Caco-2 (cell line): ENCODE measurements at regions of chr11 and their contacts with region 1.

Region 1: GRCh38 chr11:47691979-47692378 is 23.2 kb downstream of the AGBL2 start:
- DNase-seq: no peak
- H3K4me3 ChIP-seq: no peak overlapping the region
- H3K4me3 Mint-ChIP-seq: no peak overlapping the region
- H3K27ac Mint-ChIP-seq: no peak overlapping the region
- H3K4me1 ChIP-seq: peaks cover 4% of the 10 kb centered on the region; the same call in 1 of the 2 replicates
- H3K4me1 Mint-ChIP-seq: no peaks in the 10 kb centered on the region
- H3K27me3 ChIP-seq: no peaks in the 10 kb centered on the region
- H3K27me3 Mint-ChIP-seq: no peaks in the 10 kb centered on the region
- CTCF ChIP-seq: no peak

Region 2: DNA sequence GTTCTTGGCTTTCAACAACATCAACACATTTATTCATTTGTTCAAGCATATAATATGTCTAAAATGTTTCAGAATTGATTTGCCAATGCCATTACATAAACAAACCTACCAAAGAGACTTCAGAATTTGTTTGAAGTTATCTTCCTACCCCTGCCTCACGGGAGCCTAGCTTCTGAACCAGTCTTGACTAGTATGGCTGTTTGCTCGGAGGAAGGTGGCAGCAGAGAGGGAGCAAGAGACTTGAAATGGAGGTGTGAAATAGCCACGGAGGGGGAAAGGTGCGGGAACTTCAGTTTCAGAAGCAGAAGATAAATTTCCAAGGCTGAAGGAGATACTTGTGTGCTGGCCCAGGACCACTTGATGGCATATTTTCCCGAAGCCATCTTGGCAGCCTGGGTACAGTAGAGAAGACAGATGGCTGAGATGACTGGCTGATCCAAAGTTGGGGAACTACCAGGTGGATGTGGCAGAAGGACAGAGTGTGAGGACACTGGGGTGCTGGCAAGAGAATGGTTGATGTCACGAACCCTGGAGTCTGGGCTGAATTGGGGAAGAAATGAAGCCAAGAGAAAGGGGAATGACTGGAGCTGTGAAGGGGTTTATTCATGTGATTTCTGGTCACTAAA is 35.6 kb before region 1 on chr11:
- CTCF ChIA-PET with region 1: no interaction called
- POLR2A ChIA-PET with region 1: no interaction called
- intact Hi-C with region 1: loop called (anchors 5 kb)
- DNase-seq: no peak
- H3K4me3 ChIP-seq: no peak overlapping the region
- H3K4me3 Mint-ChIP-seq: no peak overlapping the region
- H3K27ac Mint-ChIP-seq: no peak overlapping the region
- H3K4me1 ChIP-seq: no peaks in the 10 kb centered on the region
- H3K4me1 Mint-ChIP-seq: no peaks in the 10 kb centered on the region
- H3K27me3 ChIP-seq: no peaks in the 10 kb centered on the region
- H3K27me3 Mint-ChIP-seq: no peaks in the 10 kb centered on the region
- CTCF ChIP-seq: no peak

Region 3: GRCh38 chr11:47932544-47932943 is 240.6 kb after region 1 on chr11:
- CTCF ChIA-PET with region 1: no interaction called
- POLR2A ChIA-PET with region 1: no interaction called
- intact Hi-C with region 1: no loop called
- DNase-seq: no peak
- H3K4me3 ChIP-seq: no peak overlapping the region
- H3K4me3 Mint-ChIP-seq: no peak overlapping the region
- H3K27ac Mint-ChIP-seq: no peak overlapping the region
- H3K4me1 ChIP-seq: no peaks in the 10 kb centered on the region
- H3K4me1 Mint-ChIP-seq: no peaks in the 10 kb centered on the region
- H3K27me3 ChIP-seq: no peaks in the 10 kb centered on the region
- H3K27me3 Mint-ChIP-seq: no peaks in the 10 kb centered on the region
- CTCF ChIP-seq: no peak